ENCODE measurements at regions of chr7 and their contacts with region 1.

Region 1: GRCh38 chr7:24283897-24284698 is at the start of gene NPY:
- DNase-seq: no peak
- H3K4me3 Mint-ChIP-seq: peak within 1 kb of the TSS; percentile 65
- H3K27ac Mint-ChIP-seq: no peak within 1 kb of the TSS
- H3K4me1 Mint-ChIP-seq: peaks cover 5% of the 10 kb centered on the region
- H3K27me3 Mint-ChIP-seq: peaks cover 53% of the 10 kb centered on the region
- total RNA-seq, gene NPY: not detected in 2 replicates

Region 2: GRCh38 chr7:23570592-23571200 is 713.4 kb before region 1 on chr7:
- intact Hi-C with region 1: loop called (anchors 5 kb)
- DNase-seq: peak; percentile 48
- H3K4me3 Mint-ChIP-seq: no peak overlapping the region
- H3K27ac Mint-ChIP-seq: no peak overlapping the region
- H3K4me1 Mint-ChIP-seq: peaks cover 5% of the 10 kb centered on the region
- H3K27me3 Mint-ChIP-seq: peaks cover 6% of the 10 kb centered on the region

Region 3: DNA sequence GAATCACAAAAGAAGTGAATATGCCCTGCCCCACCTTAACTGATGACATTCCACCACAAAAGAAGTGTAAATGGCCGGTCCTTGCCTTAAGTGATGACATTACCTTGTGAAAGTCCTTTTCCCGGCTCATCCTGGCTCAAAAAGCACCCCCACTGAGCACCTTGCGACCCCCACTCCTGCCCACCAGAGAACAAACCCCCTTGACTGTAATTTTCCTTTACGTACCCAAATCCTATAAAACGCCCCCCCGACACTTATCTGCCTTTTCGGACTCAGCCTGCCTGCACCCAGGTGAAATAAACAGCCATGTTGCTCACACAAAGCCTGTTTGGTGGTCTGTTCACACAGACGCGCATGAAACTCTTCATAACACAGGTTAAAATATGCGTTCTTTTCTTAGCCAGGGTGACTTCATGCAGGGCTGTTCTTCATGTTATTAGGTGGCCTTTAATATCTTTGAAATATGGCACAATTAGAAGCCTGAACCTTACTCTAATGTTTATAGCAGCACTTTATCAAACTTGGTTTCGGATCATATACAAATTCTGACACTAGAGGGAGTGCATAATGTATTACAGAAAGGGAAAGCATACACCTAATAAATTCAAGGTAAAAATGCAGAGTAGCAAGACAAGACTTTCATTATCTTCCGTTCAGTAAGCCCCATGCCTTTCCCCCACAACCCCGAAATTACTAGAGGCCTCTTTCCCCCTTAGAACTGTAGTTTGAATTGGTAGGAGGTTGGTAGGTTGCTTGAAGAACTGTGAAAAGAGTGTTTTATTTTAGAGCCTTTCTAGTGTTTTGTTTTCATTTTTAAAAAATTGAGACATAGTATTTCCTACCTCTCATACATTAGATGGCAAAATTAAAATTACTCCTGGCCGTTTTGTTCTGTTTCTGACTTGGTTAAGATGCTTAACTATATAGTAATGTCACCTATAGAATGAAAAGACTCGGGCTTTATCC is 117.8 kb after region 1 on chr7:
- intact Hi-C with region 1: no loop called
- DNase-seq: no peak
- H3K4me3 Mint-ChIP-seq: no peak overlapping the region
- H3K27ac Mint-ChIP-seq: no peak overlapping the region
- H3K4me1 Mint-ChIP-seq: no peaks in the 10 kb centered on the region
- H3K27me3 Mint-ChIP-seq: peaks cover 1% of the 10 kb centered on the region

Measured in activated T-helper 1 cell treated with anti-CD3 and anti-CD28 coated beads, Interleukin-12 subunit alpha, Interleukin-12 subunit beta, Interleukin-2, Interleukin-4 antibody, amounts not matched to agents 30 ng/mL and 10 ng/mL and 1 ng/mL, durations not matched to agents 14 hours and 24 hours and 36 hours (primary cell).